ENCODE measurements at regions of chr1 and their contacts with region 1.

Region 1: DNA sequence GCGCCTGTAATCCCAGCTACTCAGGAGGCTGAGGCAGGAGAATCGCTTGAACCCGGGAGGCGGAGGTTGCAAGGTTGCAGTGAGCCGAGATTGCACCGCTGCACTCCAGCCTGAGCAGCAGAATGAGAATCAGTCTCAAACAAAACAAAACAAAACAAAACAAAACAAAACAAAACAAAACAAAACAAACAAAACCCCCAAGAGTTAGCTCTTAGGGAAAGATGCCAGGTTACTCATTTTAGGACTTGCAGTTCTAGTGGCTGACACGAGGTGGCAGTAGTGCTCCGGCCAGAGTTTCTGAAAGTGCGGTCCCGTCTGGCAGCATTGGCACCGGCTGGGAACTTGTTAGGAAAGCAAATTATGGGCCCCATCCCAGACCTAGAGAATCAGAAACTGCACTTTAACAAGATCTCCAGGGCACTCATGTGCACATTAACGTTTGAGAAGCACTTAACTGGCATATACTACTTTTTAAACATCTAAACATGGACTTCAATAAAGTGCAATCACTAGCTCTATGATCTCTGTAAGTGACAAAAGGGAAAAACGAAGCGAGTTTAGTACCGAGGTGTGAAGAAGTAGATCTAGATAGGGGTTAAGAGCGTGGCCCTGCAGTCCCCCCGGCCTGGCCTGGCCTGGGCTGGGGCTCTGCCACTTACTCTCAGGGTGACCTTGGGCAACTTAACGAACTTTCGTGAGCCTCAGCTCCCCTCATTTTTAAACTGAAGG is 41.9 kb upstream of the TNFRSF1B start:
- DNase-seq: peak; percentile 74

Region 2: GRCh38 chr1:11813021-11813420 is 311.8 kb before region 1 on chr1:
- CTCF ChIA-PET with region 1: no interaction called
- POLR2A ChIA-PET with region 1: no interaction called
- DNase-seq: no peak

Region 3: DNA sequence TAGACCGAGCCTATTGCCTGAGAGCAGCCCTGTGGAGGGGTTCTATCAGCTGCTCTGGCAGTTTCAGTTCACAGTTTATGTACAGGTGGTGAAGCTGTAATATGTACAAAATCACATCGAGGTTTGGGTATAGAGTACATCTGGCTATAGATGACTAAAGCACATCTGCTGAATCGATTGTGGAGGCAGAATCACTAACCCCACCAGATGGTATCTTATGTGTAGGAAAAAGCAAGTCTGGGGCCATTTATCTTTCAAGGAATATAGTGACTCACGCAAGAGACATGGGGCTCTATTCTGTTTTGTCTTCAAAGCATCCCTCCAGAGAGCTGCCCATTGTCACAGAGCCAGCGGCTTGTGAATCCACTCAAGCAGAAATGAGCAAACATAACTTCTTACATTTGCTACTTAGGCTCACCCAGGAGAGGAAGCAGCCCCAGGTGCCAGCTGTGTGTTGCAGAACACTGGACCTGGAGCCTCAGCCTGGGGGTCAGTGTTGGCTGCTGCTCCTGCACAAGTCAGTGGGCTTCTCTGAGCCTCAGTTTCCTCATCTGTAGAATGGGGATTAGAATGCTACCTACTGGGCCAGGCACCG is 84.3 kb before region 1 on chr1:
- CTCF ChIA-PET with region 1: no interaction called
- POLR2A ChIA-PET with region 1: no interaction called
- DNase-seq: no peak

Region 4: GRCh38 chr1:12141128-12141850 is 16.4 kb after region 1 on chr1:
- CTCF ChIA-PET with region 1: interaction called, 14 read pairs
- POLR2A ChIA-PET with region 1: no interaction called
- DNase-seq: no peak

Region 5: GRCh38 chr1:12184008-12184681 is 59.3 kb after region 1 on chr1:
- CTCF ChIA-PET with region 1: interaction called, 19 read pairs
- POLR2A ChIA-PET with region 1: no interaction called
- DNase-seq: no peak

Region 6: GRCh38 chr1:12208764-12209494 is 84.1 kb after region 1 on chr1:
- CTCF ChIA-PET with region 1: interaction called, 72 read pairs
- POLR2A ChIA-PET with region 1: no interaction called
- DNase-seq: peak; percentile 83

Region 7: GRCh38 chr1:12275369-12275768 is 150.5 kb after region 1 on chr1:
- CTCF ChIA-PET with region 1: interaction called, 10 read pairs
- POLR2A ChIA-PET with region 1: no interaction called
- DNase-seq: peak; percentile 51

Region 8: GRCh38 chr1:12454406-12455391 is 329.8 kb after region 1 on chr1:
- CTCF ChIA-PET with region 1: no interaction called
- POLR2A ChIA-PET with region 1: no interaction called
- DNase-seq: no peak